SK-N-SH (cell line): ENCODE measurements at regions of chr16 and their contacts with region 1.

Region 1: DNA sequence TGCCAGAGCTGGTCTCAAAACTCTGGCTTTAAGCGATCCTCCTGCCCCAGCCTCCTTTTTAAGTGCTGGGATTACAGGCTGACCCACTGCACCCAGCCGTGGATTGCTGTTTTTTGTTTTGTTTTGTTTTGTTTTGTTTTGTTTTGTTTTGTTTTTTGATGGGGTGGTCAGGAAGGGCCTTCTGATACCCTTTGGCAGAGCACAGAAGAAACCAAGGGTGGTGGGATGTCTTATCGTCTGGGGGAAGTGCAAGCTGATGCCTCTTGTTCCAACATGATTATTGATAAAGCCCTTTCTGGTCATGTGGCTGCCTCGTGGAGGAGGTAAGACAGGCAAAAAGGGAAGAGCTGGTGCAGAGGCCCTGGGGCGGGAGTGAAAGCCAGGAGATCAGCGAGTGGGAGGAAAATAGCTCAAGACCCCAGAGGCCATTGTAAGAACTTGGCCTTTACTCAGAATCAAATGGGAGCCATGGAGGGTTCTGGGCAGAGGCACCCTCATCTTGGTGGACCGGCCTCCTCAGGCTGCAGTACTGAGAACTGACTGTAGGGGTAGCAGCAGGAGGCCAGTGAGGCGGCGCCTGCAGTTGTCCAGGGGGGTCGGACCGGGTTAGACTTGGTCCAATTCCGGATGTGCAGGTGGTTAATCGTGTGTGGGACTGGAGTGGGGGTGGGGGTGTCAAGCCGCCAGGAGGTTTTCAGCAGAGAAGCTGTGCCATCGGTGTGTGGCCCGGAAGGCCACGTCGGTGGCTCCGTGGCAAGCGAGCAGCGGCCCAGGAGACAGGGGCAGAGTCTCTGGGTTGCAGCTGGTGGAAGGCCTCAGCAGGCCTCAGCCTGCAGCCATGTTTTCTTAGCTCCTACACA is 84.4 kb upstream of the GSE1 start:
- DNase-seq: peak; percentile 70
- H3K4me3 ChIP-seq: no peak overlapping the region
- H3K27ac ChIP-seq: no peak overlapping the region; a peak in 1 of 4 replicates
- H3K4me1 ChIP-seq: peaks cover 0 to 44% of the 10 kb centered on the region in 2 experiments; a peak in 2 of 4 replicates
- H3K27me3 ChIP-seq: no peaks in the 10 kb centered on the region
- CTCF ChIP-seq: peak; percentile 50
- EP300 ChIP-seq: no peak
- RAD21 ChIP-seq: no peak

Region 2: GRCh38 chr16:85376292-85377095 is 152.3 kb before region 1 on chr16:
- CTCF ChIA-PET with region 1: no interaction called
- POLR2A ChIA-PET with region 1: no interaction called
- DNase-seq: peak; percentile 67
- H3K4me3 ChIP-seq: no peak overlapping the region
- H3K27ac ChIP-seq: peak overlapping the region in 1 of 2 experiments; percentile 99; a peak in 2 of 4 replicates
- H3K4me1 ChIP-seq: peaks cover 10 to 99% of the 10 kb centered on the region in 2 experiments
- H3K27me3 ChIP-seq: no peaks in the 10 kb centered on the region
- CTCF ChIP-seq: no peak
- EP300 ChIP-seq: no peak; a peak in 1 of 4 replicates
- RAD21 ChIP-seq: peak; percentile 16; the same call in 1 of the 2 replicates

Region 3: DNA sequence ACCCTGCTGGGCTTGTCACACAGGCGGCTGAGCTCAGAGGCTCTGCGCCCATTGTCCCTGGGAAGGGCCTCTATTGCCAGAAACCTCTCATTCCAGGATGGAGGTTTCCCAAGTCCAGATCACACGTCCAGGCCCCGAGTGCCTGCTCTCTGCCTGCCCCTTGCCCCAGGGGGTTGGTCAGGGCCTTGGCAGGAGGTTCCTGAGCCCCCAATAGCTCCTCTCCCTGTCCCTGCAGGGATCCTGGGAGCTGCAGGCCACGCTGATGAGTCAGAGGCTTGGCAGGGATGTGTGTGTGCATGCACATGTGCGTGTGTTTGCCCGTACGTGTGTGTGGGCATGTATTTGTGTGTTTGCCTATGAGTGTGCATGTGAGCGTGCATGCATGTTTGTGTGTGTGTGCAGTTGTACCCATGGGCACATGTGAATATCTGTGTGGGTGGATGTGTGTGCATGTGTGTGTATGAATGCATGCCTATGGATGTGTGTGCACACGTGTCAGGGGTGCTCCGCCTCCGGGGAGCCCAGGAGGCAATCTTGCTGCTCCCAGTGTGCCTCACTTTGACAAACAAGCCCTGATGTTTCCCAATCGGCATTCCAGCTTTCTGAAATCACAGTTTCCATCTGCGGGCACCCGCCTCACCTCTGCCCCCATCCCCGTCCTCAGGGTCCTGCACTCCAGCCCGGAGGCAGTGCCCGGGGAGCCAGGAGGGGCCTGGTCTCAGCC is 14.0 kb before region 1 on chr16:
- CTCF ChIA-PET with region 1: interaction called, 10 read pairs
- POLR2A ChIA-PET with region 1: no interaction called
- DNase-seq: peak; percentile 84
- H3K4me3 ChIP-seq: peak overlapping the region in 1 of 2 experiments; percentile 9; a peak in 1 of 4 replicates
- H3K27ac ChIP-seq: peak overlapping the region; percentile 68 to 81
- H3K4me1 ChIP-seq: peaks cover 25 to 48% of the 10 kb centered on the region in 2 experiments; a peak in 3 of 4 replicates
- H3K27me3 ChIP-seq: no peaks in the 10 kb centered on the region
- CTCF ChIP-seq: no peak
- EP300 ChIP-seq: 0 out of 4 replicates have a peak, but pooled peaks of 1 of the 2 experiments have one; percentile 5
- RAD21 ChIP-seq: 0 out of 2 replicates have a peak, but pooled peaks have one; percentile 1

Region 4: GRCh38 chr16:85541980-85542900 is 13.5 kb after region 1 on chr16:
- CTCF ChIA-PET with region 1: interaction called, 48 read pairs
- POLR2A ChIA-PET with region 1: no interaction called
- DNase-seq: no peak
- H3K4me3 ChIP-seq: no peak overlapping the region
- H3K27ac ChIP-seq: no peak overlapping the region; a peak in 1 of 4 replicates
- H3K4me1 ChIP-seq: peaks cover 0 to 43% of the 10 kb centered on the region in 2 experiments; a peak in 1 of 4 replicates
- H3K27me3 ChIP-seq: no peaks in the 10 kb centered on the region
- CTCF ChIP-seq: no peak
- EP300 ChIP-seq: no peak
- RAD21 ChIP-seq: no peak